Dorsolateral prefrontal cortex (tissue), 120 donors: ENCODE measurements at regions of chr4 and their contacts with region 1.

Region 1: GRCh38 chr4:55345980-55346850 is at the start of gene SRD5A3:
- DNase-seq: peak; percentile 66 to 91 (median 78)
- H3K4me3 ChIP-seq: peak within 1 kb of the TSS; percentile 59 to 96 (median 82)
- H3K27ac ChIP-seq: peak within 1 kb of the TSS; percentile 86 to 99 (median 98)
- H3K27me3 ChIP-seq: no peaks in the 10 kb centered on the region
- CTCF ChIP-seq: peak; percentile 66 to 99 (median 90)
- total RNA-seq, gene SRD5A3: 6.0 to 34.8 (median 15.9) TPM

Region 2: GRCh38 chr4:55363691-55364351 is 17.6 kb after region 1 on chr4:
- intact Hi-C with region 1: loop called in 1 of 2 experiments (anchors 1 kb)
- DNase-seq: peak in 9 of 10 donors; percentile 44 to 86 (median 74)
- H3K4me3 ChIP-seq: peak overlapping the region in 11 of 59 donors; percentile 1 to 31 (median 8)
- H3K27ac ChIP-seq: peak overlapping the region; percentile 68 to 100 (median 96)
- H3K27me3 ChIP-seq: no peaks in the 10 kb centered on the region
- CTCF ChIP-seq: peak in 2 of 56 donors; percentile 15 to 31

Region 3: DNA sequence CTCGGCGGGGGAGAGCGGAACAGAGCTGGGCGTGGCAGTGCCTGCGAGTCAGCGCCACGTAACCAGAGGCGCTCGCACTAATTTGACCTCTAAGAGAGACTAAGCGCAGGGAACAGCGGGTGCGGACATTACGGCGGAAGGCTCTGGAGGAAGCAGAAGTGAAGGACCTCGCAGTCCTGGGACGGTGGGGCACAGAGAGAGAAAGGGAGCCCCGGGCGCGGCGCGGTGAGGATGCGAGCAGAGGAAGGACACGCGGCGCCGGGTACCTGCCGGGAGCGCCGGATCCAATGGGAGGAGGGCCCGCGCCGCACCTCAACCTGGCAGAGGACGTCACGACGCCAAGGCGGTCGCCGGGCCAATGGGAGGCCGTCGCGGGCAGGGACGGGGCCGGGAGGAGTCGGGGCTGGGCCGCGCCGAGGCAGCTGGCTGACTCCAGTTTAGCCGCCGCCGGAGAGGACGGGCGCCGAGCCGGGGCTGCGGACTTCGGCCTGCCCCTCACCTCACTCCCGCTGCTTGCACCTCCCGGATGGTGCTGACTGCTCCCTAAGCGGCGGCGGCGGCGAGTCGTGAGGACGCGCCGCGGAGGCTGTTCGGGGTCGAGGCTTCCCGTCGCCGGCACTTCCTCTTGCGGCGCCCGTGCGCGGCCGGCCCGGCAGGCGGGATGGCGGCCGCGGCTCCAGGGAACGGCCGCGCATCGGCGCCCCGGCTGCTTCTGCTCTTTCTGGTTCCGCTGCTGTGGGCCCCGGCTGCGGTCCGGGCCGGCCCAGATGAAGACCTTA is 49.5 kb after region 1 on chr4 and contains the start of gene TMEM165:
- intact Hi-C with region 1: loop called (anchors 1 kb)
- DNase-seq: peak; percentile 76 to 96 (median 90)
- H3K4me3 ChIP-seq: peak within 1 kb of the TSS; percentile 66 to 100 (median 92)
- H3K27ac ChIP-seq: peak within 1 kb of the TSS; percentile 83 to 99 (median 97)
- H3K27me3 ChIP-seq: no peaks in the 10 kb centered on the region
- CTCF ChIP-seq: peak in 28 of 56 donors; percentile 2 to 45 (median 28)
- total RNA-seq, gene TMEM165: 53.1 to 690 (median 173) TPM

Region 4: GRCh38 chr4:55424791-55425190 is 78.6 kb after region 1 on chr4:
- intact Hi-C with region 1: loop called in 1 of 2 experiments (anchors 5 kb)
- DNase-seq: no peak
- H3K4me3 ChIP-seq: no peak overlapping the region
- H3K27ac ChIP-seq: peak overlapping the region in 38 of 59 donors; percentile 1 to 63 (median 21)
- H3K27me3 ChIP-seq: no peaks in the 10 kb centered on the region
- CTCF ChIP-seq: no peak

Region 5: GRCh38 chr4:55853484-55854046 is 507.4 kb after region 1 on chr4 and contains the start of gene EXOC1:
- intact Hi-C with region 1: loop called in 1 of 2 experiments (anchors 10 kb)
- DNase-seq: peak; percentile 97 to 99 (median 98)
- H3K4me3 ChIP-seq: peak within 1 kb of the TSS; percentile 65 to 100 (median 93)
- H3K27ac ChIP-seq: peak within 1 kb of the TSS in 42 of 59 donors; percentile 2 to 85 (median 60)
- H3K27me3 ChIP-seq: peaks cover 0 to 12% (median 0%) of the 10 kb centered on the region in 45 donors
- CTCF ChIP-seq: peak in 19 of 56 donors; percentile 8 to 51 (median 28)
- total RNA-seq, gene EXOC1: 22.0 to 65.5 (median 49.2) TPM